Activated naive CD4-positive, alpha-beta T cell treated with anti-CD3 and anti-CD28 coated beads for 36 hours (primary cell): ENCODE measurements at regions of chr2 and their contacts with region 1.

Region 1: GRCh38 chr2:102366406-102367112 is 11.0 kb downstream of the IL18R1 start:
- DNase-seq: peak; percentile 52
- H3K4me3 Mint-ChIP-seq: peak overlapping the region; percentile 20
- H3K27ac Mint-ChIP-seq: peak overlapping the region; percentile 94
- H3K4me1 Mint-ChIP-seq: peaks cover 80% of the 10 kb centered on the region
- H3K27me3 Mint-ChIP-seq: no peaks in the 10 kb centered on the region

Region 2: DNA sequence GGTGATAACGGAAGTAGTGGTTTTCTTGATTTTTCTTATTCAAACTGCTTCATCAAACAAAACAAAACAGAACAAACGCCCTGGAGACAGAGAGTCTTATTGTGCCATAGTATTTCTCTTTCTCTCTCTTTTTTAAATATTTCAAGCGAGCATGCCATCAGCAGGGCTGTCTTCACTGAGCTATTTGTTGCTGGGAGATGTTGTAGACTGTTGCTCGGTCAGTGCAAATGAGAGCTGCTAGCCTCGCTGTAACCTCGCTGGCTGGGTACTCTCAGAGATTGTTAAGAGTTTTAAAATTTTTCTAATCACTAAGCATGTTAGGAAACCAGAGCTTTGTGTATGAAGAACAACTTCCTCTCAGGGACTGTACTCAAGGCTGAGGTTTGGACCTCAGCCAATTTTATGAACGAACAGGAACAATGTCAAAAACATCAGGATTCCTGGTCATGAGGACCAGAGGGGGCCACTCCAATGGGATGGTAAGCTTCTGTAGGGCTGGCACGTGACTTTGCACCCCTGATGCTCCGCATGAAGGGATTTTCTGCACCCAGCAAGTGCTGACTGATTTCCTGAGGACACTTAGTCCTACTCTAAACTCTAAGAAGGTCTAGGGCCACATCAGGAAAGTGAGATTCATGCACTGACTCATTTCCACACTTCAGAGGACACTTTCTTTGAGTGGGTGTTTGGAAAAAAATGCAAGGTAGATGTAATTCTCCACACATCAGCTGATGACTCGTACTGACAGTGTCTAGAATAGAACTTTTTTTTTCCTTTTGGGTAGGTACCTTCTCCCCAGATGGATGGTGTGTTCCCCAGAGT is 283.8 kb before region 1 on chr2:
- CTCF ChIA-PET with region 1: no interaction called
- intact Hi-C with region 1: loop called (anchors 1 kb)
- DNase-seq: peak; percentile 79
- H3K4me3 Mint-ChIP-seq: peak overlapping the region; percentile 30
- H3K27ac Mint-ChIP-seq: peak overlapping the region; percentile 91
- H3K4me1 Mint-ChIP-seq: peaks cover 60% of the 10 kb centered on the region
- H3K27me3 Mint-ChIP-seq: no peaks in the 10 kb centered on the region

Region 3: GRCh38 chr2:102137138-102137537 is 229.4 kb before region 1 on chr2:
- CTCF ChIA-PET with region 1: no interaction called
- intact Hi-C with region 1: loop called (anchors 1 kb)
- DNase-seq: peak; percentile 72
- H3K4me3 Mint-ChIP-seq: no peak overlapping the region
- H3K27ac Mint-ChIP-seq: peak overlapping the region; percentile 62
- H3K4me1 Mint-ChIP-seq: peaks cover 39% of the 10 kb centered on the region
- H3K27me3 Mint-ChIP-seq: peaks cover 26% of the 10 kb centered on the region

Region 4: DNA sequence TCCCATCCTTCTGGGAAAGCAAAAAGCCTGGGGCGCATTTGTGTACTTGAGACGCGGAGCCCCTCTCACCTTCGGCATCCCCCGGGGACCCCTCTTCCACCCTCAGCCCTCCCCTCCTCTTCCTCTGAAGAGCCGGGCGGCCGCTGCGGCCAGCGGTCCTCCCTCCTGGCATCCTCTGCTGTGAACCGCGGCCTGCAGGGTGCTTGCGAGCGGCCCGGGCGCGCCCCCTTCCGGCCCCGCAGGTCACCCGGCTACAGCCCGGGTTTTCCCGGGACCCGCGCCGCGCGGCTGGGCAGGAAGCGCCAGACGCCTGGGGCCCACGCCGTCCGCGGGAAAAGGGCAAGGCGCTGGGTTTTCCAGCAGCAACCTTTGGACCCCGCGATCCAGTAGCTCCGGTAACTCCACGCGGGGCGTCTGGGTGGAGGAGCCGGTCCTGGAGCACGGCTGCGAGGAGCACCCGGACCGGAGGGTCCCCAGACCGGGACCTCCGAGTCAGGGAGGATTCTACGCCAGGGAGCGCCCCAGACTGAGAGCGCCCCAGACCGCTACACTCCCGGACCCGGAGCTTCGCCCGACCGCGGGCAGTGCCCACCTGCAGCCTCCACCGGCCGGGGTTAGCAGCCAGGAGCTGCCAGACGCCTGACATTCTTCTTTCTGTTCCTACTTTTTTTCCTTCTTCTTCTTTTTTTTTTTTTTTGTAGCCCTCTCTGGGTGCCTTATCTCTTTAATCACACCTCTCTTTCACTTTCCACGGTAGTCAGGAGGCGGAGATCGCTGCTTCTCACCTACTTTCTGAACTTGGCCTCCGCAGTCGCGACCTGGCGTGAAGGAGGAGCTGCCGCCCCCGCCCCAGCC is 10.8 kb before region 1 on chr2 and contains the start of gene IL18R1:
- CTCF ChIA-PET with region 1: interaction called, 14 read pairs
- intact Hi-C with region 1: loop called (anchors 1 kb)
- DNase-seq: peak; percentile 74
- H3K4me3 Mint-ChIP-seq: peak within 1 kb of the TSS; percentile 99
- H3K27ac Mint-ChIP-seq: peak within 1 kb of the TSS; percentile 96
- H3K4me1 Mint-ChIP-seq: peaks cover 45% of the 10 kb centered on the region
- H3K27me3 Mint-ChIP-seq: no peaks in the 10 kb centered on the region
- total RNA-seq, gene IL18R1: 17.1 to 18.4 TPM

Region 5: DNA sequence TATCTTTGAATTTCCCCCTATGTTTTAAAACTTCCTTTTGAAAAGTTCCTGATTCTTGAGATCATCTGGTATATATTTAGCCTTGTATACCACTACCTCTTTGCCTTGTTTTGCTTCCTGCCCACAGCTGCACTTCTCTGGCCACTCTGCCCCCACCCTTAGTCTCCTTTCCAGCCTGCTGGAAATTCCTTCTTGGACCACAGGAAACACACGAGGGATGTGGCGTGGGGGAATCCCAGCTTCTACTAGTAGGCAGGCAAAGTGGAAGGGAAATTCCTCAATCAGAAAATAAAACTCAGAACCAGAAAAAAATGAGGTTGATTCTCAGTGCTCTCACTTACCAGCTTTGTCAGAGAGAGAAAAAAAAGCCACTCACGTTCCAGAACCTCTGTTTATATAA is 69.8 kb after region 1 on chr2:
- CTCF ChIA-PET with region 1: interaction called, 3 read pairs
- intact Hi-C with region 1: loop called (anchors 1 kb)
- DNase-seq: peak; percentile 56
- H3K4me3 Mint-ChIP-seq: no peak overlapping the region
- H3K27ac Mint-ChIP-seq: peak overlapping the region; percentile 68
- H3K4me1 Mint-ChIP-seq: peaks cover 27% of the 10 kb centered on the region
- H3K27me3 Mint-ChIP-seq: no peaks in the 10 kb centered on the region